ENCODE measurements at regions of chr17 and their contacts with region 1.

Region 1: DNA sequence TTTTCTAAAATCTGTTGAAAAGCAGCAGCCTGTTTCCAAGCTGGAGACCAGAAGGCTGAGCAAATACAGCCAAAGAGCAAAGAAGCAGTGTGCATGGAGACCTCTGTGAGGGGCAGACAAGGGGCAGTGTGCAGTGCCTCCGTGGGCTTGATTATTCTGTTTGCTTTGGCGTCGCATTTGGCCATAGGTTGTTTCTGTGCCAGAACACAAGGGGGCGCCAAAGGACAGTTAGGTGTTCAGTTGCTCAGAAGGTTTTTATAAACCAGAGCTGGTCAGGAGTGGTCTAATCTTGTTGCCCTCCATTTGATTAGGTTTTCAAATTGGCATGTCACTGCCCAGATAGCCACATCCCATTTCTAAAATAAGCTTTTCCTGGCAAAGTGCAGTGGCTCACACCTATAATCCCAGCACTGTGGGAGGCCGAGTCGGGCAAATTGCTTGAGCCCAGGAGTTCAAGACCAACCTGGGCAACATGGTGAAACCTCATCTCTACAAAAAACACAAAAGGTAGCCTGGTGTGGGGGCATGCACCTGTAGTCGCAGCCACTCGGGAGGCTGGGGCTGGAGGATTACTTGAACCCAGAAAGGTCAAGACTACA is 10.6 kb downstream of the MYH3 start:
- DNase-seq: peak; percentile 72
- CTCF ChIP-seq: peak; percentile 90

Region 2: DNA sequence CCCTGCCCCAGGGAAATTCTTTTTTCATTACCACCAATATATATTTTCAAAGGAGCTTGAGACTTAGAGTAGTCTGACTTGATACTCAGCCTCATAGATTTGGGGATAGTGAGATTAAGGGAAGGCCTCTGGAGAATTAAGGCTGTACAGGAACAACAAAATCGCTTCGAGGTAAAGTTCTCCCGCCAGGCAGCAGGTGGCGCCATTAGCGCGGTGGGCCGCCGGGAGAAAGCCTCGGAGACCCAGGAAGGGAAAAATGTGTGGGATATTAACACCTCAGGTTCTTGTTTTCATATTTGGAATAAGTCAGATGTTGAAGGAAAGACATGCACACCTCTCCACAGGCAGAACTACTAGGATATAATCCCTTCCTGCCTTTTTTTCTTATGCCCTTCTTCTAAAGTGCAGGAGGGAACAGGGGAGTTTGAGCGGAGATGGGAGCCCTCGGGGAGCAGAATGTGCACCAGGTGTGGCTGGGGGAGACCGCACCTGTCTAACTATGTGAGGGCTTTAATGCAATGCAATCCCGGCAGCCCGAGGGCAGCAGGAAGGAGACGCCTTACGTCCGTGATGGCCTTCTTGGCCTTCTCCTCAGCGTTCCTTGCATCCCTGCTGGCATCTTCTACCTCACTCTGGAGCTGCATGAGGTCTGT is 15.3 kb before region 1 on chr17:
- CTCF ChIA-PET with region 1: interaction called, 110 read pairs
- POLR2A ChIA-PET with region 1: no interaction called
- DNase-seq: peak; percentile 53
- CTCF ChIP-seq: peak; percentile 83

Region 3: DNA sequence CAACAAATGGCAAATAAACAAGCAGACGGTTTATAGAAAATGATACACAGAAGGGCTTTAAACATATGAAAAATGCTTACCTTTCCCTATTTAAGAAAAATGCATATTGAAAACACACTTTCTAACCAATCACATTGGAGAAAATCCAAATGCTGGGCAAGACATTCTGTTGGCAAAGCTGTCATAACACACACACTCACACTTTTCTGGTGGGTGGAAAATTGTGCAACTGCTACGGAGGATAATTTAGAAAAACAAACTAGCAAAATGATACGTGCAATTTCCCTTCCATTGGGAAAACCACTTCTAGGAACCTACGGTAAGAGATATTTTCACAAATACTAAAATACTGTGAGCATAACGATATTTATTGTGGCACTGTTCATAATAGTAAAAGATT is 20.4 kb after region 1 on chr17:
- CTCF ChIA-PET with region 1: interaction called, 14 read pairs
- POLR2A ChIA-PET with region 1: no interaction called
- DNase-seq: no peak
- CTCF ChIP-seq: no peak

Region 4: GRCh38 chr17:10683853-10684252 is 37.4 kb after region 1 on chr17:
- CTCF ChIA-PET with region 1: interaction called, 42 read pairs
- POLR2A ChIA-PET with region 1: no interaction called
- DNase-seq: no peak
- CTCF ChIP-seq: peak; percentile 41

Region 5: GRCh38 chr17:10844621-10845387 is 198.3 kb after region 1 on chr17:
- CTCF ChIA-PET with region 1: interaction called, 79 read pairs
- POLR2A ChIA-PET with region 1: no interaction called
- DNase-seq: peak; percentile 86
- CTCF ChIP-seq: peak; percentile 91

Measured in GM10248 (cell line).